Ovary (tissue), 10 donors: ENCODE measurements at regions of chr2 and their contacts with region 1.

Region 1: GRCh38 chr2:8472545-8473323 is 209.1 kb upstream of the ID2 start:
- DNase-seq: peak in 1 of 5 donors; percentile 3
- H3K4me3 ChIP-seq: no peak overlapping the region
- H3K27ac ChIP-seq: no peak overlapping the region
- H3K4me1 ChIP-seq: no peaks in the 10 kb centered on the region
- H3K27me3 ChIP-seq: no peaks in the 10 kb centered on the region
- CTCF ChIP-seq: no peak
- EP300 ChIP-seq: no peak
- POLR2A ChIP-seq: no peak

Region 2: DNA sequence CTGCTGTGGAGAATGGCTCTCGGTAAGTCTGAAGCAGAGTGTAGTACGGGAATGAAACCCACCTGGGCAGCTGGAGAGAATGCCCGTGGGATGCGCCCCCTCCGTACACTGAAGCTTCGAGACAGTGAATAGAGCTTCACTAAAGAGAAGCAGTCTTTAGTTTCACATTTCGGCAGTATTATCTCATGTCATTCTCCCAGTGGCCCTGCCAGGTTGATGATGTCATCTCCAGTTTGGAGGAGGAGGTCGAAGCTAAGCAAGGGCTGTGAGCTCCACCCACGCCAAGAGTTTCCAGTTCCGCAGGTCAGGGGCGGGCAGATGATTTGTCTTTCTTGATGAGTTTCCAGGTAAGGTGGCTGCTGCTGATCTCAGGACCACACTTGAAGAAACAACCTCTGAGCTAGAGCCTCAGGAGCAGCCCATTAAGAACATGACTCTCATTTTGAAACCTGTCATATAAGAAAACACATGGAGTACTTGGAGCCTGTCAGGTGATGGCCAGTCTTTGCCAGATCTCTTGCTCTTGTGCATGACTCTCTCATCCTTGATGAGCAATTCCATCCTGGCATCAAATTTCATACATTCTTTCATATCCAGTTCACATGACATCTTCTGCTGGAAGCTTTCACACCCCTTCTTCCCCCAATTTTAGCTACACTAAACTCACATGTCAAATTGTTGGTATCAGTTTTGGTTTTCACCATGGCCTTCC is 1080.5 kb before region 1 on chr2:
- intact Hi-C with region 1: no loop called
- DNase-seq: no peak
- H3K4me3 ChIP-seq: no peak overlapping the region
- H3K27ac ChIP-seq: no peak overlapping the region
- H3K4me1 ChIP-seq: no peaks in the 10 kb centered on the region
- H3K27me3 ChIP-seq: no peaks in the 10 kb centered on the region
- CTCF ChIP-seq: no peak
- EP300 ChIP-seq: no peak
- POLR2A ChIP-seq: no peak

Region 3: DNA sequence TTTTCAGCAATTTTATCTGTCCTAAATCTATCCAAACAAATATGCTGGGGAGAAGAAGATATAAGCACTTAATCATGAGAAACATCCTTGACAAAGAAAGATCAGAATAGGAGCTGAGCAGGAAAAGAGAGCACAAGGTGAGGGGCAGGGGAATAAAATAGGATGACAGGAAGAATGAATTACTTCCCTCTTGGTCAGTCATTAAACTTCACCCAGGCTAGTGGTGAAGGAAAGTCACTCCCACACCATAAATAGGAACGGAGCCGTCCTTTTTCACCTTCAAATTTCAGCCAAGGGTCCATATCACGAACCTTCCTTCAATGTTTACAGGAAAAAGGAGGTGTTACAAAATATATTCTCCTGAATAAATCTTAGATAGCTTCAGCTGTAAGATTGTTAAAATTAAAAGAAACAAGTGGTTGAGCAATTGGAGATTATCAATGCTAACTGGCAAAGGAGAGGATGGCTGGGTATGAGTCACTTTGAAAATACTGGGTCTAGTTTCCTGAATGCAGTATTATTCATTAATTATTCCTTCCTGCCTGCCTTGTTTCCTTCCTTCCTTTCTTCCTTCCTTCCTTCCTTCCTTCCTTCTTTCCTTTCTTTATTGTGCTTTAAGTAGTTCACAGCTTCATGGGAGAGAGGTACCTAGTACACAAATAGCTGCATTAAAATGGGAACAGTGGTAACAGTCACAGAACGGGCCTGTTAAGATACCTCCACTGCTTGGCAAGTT is 83.2 kb before region 1 on chr2:
- intact Hi-C with region 1: loop called in 1 of 4 experiments (anchors 2 kb)
- DNase-seq: no peak
- H3K4me3 ChIP-seq: no peak overlapping the region
- H3K27ac ChIP-seq: no peak overlapping the region
- H3K4me1 ChIP-seq: no peaks in the 10 kb centered on the region
- H3K27me3 ChIP-seq: no peaks in the 10 kb centered on the region
- CTCF ChIP-seq: no peak
- EP300 ChIP-seq: no peak
- POLR2A ChIP-seq: no peak